ENCODE measurements at regions of chr20 and their contacts with region 1.

Region 1: GRCh38 chr20:9359561-9360308 is 154.7 kb upstream of the LAMP5 start:
- DNase-seq: peak; percentile 26 to 70 (median 40)
- ATAC-seq: peak; percentile 73 to 80
- H3K4me3 ChIP-seq: no peak overlapping the region
- H3K27ac ChIP-seq: no peak overlapping the region
- H3K4me1 ChIP-seq: no peaks in the 10 kb centered on the region
- H3K27me3 ChIP-seq: no peaks in the 10 kb centered on the region

Region 2: GRCh38 chr20:8782804-8783203 is 576.9 kb before region 1 on chr20:
- intact Hi-C with region 1: loop called in 3 of 4 experiments (anchors 5 to 10 kb)
- DNase-seq: no peak
- ATAC-seq: peak in 1 of 2 donors; percentile 37
- H3K4me3 ChIP-seq: no peak overlapping the region
- H3K27ac ChIP-seq: no peak overlapping the region
- H3K4me1 ChIP-seq: no peaks in the 10 kb centered on the region
- H3K27me3 ChIP-seq: no peaks in the 10 kb centered on the region

Region 3: DNA sequence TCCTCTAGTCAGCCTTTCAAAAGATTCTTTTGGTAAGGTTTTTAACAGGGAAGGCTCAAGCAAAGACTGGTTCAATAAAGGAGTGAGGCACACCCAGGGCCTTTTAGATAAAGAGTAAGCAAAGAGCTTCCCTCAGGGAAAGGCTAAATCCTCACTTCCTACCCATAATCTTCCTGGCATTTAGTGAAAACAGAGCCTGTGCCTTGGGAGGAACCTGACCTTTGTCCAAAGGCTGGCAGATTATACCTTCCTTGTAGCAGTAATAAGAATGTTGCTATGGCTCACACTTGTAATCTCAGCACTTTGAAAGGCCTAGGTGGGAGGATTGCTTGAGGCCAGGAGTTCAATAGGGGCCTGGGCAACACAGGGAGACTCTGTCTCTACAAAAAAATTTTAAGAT is 570.9 kb before region 1 on chr20:
- intact Hi-C with region 1: loop called in 3 of 4 experiments (anchors 5 to 10 kb)
- DNase-seq: no peak
- ATAC-seq: peak; percentile 33 to 69
- H3K4me3 ChIP-seq: no peak overlapping the region
- H3K27ac ChIP-seq: no peak overlapping the region
- H3K4me1 ChIP-seq: no peaks in the 10 kb centered on the region
- H3K27me3 ChIP-seq: no peaks in the 10 kb centered on the region

Region 4: DNA sequence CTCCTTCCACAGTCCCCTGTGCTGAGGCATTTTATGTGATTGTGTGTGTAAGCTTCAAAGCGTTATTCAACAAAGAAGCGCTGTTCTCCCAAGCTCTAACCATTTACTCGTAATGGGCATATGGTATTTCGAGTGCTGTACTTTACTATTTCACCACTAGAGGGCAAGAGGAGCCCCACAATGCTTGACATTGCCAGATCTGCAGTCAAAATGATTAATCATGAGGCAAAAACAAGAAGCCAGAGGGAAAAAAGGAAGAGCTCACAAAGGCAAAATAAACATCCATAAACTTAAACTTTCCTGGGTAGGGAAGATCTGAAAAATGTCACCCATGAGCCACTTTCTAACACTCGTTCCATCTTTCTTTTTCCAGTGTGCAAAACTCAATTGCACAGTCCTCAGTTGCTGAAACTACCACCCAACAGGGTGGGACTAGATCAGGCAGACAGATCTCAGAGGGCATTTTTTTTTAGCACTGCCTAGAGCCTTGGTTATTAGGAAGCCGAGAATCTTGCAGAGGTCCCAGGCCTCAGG is 505.9 kb before region 1 on chr20:
- intact Hi-C with region 1: loop called (anchors 2 to 10 kb)
- DNase-seq: no peak
- ATAC-seq: peak; percentile 88 to 89
- H3K4me3 ChIP-seq: no peak overlapping the region
- H3K27ac ChIP-seq: peak overlapping the region; percentile 48
- H3K4me1 ChIP-seq: no peaks in the 10 kb centered on the region
- H3K27me3 ChIP-seq: no peaks in the 10 kb centered on the region

Region 5: GRCh38 chr20:9068851-9069663 is 290.7 kb before region 1 on chr20 and contains the start of gene PLCB4:
- intact Hi-C with region 1: loop called in 2 of 4 experiments (anchors 5 to 10 kb)
- DNase-seq: peak; percentile 46 to 80 (median 80)
- ATAC-seq: peak; percentile 33 to 52
- H3K4me3 ChIP-seq: peak within 1 kb of the TSS; percentile 92
- H3K27ac ChIP-seq: peak within 1 kb of the TSS; percentile 76
- H3K4me1 ChIP-seq: peaks cover 5% of the 10 kb centered on the region
- H3K27me3 ChIP-seq: no peaks in the 10 kb centered on the region
- total RNA-seq, gene PLCB4: 22.8 to 42.2 (median 28.3) TPM